Activated CD4-positive, alpha-beta memory T cell treated with anti-CD3 and anti-CD28 coated beads for 36 hours (primary cell): ENCODE measurements at regions of chr6 and their contacts with region 1.

Region 1: DNA sequence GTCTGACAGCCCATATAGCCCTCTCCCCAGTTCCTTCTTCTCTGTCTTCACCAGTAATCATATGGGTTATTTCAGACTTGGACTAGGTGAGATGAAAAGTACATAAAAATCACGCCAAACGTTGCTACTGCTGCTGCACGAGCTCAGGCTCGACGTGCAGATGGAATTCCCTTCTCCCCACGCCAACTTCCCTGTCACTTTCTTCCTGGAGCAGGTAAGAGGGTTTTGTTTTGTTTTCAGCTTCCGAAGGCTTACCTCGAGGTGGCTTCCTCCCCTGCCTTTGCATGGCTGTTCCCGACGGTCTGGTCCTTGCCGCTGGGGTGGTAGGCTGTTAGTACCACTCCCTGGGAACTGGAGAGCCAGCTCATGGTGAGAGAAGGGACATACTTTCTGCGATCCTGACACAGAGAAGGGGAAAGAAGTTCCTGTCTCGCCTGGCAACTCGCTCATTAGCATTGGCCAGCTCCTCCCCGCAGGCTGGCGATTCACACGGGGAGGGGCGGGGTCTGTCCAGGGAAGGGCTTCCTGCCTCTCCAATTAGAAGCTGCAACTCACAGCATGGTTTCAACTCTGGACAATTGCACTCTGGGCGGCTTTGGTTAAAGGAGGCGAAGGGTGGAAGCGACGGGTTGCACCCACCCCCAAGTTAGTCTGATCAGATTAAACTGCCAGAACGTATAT is at the start of gene ARHGAP18:
- DNase-seq: peak; percentile 87
- H3K4me3 Mint-ChIP-seq: peak within 1 kb of the TSS; percentile 86
- H3K27ac Mint-ChIP-seq: peak within 1 kb of the TSS; percentile 33
- H3K4me1 Mint-ChIP-seq: peaks cover 33% of the 10 kb centered on the region
- H3K27me3 Mint-ChIP-seq: no peaks in the 10 kb centered on the region
- total RNA-seq, gene ARHGAP18: 7.0 to 9.2 TPM

Region 2: DNA sequence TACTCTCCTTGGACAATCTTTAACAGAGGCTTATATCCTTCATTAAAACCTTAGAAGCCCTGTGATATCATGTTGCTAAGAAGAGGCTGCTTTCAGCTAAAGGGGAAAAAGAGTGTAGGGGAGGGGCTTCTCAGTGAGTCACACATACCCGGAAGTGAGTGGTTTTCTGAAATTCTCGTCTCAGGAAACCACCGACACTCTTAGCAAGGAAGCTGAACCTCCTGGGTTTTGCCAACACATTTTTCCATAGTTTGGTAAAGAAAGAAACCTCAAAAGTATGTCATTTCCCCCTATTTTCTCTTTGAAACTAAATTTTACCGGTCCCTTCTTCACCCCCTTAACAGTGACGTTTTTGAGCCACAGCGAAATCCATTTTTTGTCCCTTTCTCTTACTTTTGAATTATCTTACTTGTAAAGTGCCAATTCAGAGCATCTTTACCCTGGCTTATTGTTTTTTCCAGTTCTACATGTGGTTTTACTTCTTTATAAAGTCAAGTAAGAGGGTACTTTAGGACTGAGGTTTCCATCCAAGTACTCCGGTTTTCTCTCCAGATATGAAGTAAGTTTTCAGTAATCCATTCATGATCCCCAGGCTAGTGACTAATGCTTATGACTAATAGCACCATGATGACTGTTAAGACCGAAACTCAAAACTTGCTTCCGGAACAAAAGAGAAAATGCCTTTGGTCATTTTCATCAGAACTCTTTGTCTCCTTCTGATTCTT is 219.2 kb before region 1 on chr6:
- CTCF ChIA-PET with region 1: no interaction called
- POLR2A ChIA-PET with region 1: no interaction called
- intact Hi-C with region 1: no loop called
- DNase-seq: peak; percentile 78
- H3K4me3 Mint-ChIP-seq: peak overlapping the region; percentile 61
- H3K27ac Mint-ChIP-seq: peak overlapping the region; percentile 98
- H3K4me1 Mint-ChIP-seq: peaks cover 61% of the 10 kb centered on the region
- H3K27me3 Mint-ChIP-seq: no peaks in the 10 kb centered on the region

Region 3: DNA sequence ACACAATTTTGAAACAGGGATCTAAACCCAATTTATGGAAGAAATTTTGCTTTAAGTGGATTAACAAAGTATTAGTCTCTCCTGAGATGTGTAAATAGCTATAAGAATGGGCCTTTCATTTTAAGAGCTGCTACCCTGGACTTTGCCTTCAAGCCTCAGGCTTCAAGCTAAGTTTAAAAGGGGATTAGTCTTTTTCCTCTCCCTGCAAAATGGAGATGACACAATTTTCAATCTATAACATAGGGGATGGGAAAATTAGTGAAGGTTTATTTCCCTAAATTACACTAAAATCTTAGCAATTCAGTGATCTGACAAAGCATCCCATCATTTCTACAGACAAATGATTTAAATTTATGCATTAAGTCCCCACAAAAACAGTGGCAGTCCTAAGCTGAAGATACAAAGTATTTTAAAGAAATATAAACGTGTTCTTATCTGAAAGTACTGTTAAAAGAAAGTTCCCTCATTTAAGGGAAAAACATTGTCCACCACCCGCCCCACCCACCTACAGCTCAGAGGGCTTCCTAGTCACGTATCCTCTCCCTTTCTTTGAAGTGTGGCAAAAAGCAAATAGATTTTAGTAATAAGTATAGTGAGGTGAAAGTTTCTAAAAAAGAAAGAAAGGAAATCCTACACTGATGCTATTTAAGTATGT is 14.4 kb before region 1 on chr6:
- CTCF ChIA-PET with region 1: interaction called, 4 read pairs
- POLR2A ChIA-PET with region 1: no interaction called
- intact Hi-C with region 1: loop called (anchors 1 kb)
- DNase-seq: peak; percentile 64
- H3K4me3 Mint-ChIP-seq: no peak overlapping the region
- H3K27ac Mint-ChIP-seq: no peak overlapping the region
- H3K4me1 Mint-ChIP-seq: peaks cover 29% of the 10 kb centered on the region
- H3K27me3 Mint-ChIP-seq: no peaks in the 10 kb centered on the region

Region 4: GRCh38 chr6:129996387-129996786 is 286.5 kb after region 1 on chr6:
- CTCF ChIA-PET with region 1: no interaction called
- POLR2A ChIA-PET with region 1: no interaction called
- intact Hi-C with region 1: no loop called
- DNase-seq: no peak
- H3K4me3 Mint-ChIP-seq: no peak overlapping the region
- H3K27ac Mint-ChIP-seq: no peak overlapping the region
- H3K4me1 Mint-ChIP-seq: no peaks in the 10 kb centered on the region
- H3K27me3 Mint-ChIP-seq: no peaks in the 10 kb centered on the region